K562 (cell line): ENCODE measurements at regions of chr12 and their contacts with region 1.

Region 1: DNA sequence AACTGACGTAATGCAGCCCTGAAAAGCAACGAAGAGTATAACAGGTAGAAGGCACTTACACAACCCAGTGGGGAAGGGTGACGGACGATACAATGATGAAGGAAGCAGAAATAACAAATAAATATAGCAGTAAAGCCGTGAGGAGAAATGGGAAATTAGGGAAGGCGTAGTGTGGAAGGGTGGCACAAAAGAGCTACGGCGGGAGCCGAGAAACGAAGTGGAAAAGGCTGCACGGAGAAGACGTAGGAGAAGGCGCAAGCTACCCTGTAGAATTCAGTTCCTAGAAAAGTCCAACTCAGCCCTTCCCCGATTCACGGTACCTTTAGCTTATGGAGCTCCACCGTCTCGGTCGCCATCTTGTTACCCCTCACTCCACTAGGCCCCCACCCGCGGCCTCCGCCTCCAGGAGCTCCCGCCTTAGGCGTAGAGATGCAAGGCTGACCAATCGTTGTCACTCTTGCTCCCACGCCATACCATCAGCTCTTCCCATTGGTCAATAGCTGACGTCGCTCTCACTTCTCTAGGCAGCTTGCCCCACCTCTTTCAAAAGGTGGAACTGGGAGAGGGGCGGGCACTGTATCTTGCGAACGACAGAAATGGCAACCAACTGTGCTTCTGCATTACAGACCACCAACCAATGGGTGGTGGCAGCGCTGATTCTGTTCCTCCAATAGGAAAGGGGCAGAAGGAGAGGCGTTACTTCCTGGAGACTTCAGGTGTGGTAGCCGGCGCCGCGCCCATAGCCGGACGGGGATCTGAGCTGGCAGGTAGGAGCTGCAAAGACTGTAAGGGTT is at the starts of genes ORMDL2 and SARNP:
- DNase-seq: peak; percentile 98 to 99 (median 98)
- ATAC-seq: peak; percentile 98
- H3K4me3 ChIP-seq: peak within 1 kb of the TSS; percentile 65
- H3K27ac ChIP-seq: peak within 1 kb of the TSS; percentile 93
- H3K4me1 ChIP-seq: peaks cover 3 to 8% of the 10 kb centered on the region in 2 experiments; a peak in 4 of 5 replicates
- H3K27me3 ChIP-seq: no peaks in the 10 kb centered on the region
- CTCF ChIP-seq: no peak
- EP300 ChIP-seq: no peak
- POLR2A ChIP-seq: peak; percentile 92
- RAD21 ChIP-seq: no peak
- polyA plus RNA-seq, gene ORMDL2: 98.0 to 113 TPM
- polyA plus RNA-seq, gene SARNP: 342 to 400 TPM

Region 2: DNA sequence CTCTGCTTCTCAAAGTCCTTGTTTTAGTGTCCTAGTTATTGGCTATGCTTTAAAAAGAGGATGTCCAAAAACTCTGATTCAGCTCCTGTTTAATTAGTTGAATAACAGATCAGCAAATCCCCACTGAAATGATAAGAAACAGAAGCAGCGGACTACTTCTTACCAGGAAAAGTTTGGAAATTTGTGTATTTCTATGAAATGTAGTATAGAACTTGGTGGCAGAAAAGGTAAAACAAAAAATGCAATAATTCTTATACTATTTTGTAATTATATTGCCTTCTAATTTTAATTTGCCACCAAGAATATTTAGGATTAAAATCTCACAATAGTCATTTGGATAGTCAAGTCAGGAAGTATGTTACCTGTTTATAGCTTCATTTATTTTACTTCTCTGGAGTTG is 245.4 kb before region 1 on chr12 and contains the start of gene OR2AP1:
- CTCF ChIA-PET with region 1: no interaction called
- POLR2A ChIA-PET with region 1: no interaction called
- in situ Hi-C with region 1: no loop called
- intact Hi-C with region 1: no loop called
- DNase-seq: no peak
- ATAC-seq: no peak
- H3K4me3 ChIP-seq: no peak within 1 kb of the TSS
- H3K27ac ChIP-seq: no peak within 1 kb of the TSS
- H3K4me1 ChIP-seq: no peaks in the 10 kb centered on the region
- H3K27me3 ChIP-seq: no peaks in the 10 kb centered on the region
- CTCF ChIP-seq: no peak
- EP300 ChIP-seq: no peak
- POLR2A ChIP-seq: no peak
- RAD21 ChIP-seq: no peak
- polyA plus RNA-seq, gene OR2AP1: not detected

Region 3: GRCh38 chr12:55797068-55797467 is 20.5 kb before region 1 on chr12:
- CTCF ChIA-PET with region 1: no interaction called
- POLR2A ChIA-PET with region 1: interaction called, 26 read pairs
- in situ Hi-C with region 1: no loop called
- intact Hi-C with region 1: no loop called
- DNase-seq: peak; percentile 31 to 61 (median 48)
- ATAC-seq: peak; percentile 90
- H3K4me3 ChIP-seq: no peak overlapping the region
- H3K27ac ChIP-seq: no peak overlapping the region
- H3K4me1 ChIP-seq: no peaks in the 10 kb centered on the region
- H3K27me3 ChIP-seq: no peaks in the 10 kb centered on the region
- CTCF ChIP-seq: peak; percentile 48 to 71 (median 54)
- EP300 ChIP-seq: no peak
- POLR2A ChIP-seq: no peak
- RAD21 ChIP-seq: peak; percentile 59 to 66

Region 4: DNA sequence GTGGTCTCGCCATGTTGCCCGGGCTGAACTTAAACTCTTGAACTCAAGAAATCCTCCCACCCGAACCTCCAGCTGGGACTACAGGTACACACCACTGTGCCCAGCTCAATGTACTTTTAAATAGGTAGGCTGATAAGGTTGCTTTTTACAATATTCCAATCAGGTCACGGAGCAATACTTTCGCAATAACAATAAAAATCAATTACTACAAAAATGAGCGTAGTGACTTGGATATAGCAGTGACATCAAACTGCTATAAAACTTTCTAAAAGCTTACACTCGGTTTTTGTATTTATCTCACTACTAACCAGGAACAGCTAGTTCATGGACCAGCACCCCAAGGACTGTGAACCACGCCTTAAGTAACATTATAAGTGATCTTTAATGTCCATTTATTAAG is 10.6 kb before region 1 on chr12:
- CTCF ChIA-PET with region 1: no interaction called
- POLR2A ChIA-PET with region 1: interaction called, 20 read pairs
- in situ Hi-C with region 1: no loop called
- intact Hi-C with region 1: no loop called
- DNase-seq: no peak
- ATAC-seq: no peak
- H3K4me3 ChIP-seq: no peak overlapping the region
- H3K27ac ChIP-seq: no peak overlapping the region
- H3K4me1 ChIP-seq: no peaks in the 10 kb centered on the region
- H3K27me3 ChIP-seq: no peaks in the 10 kb centered on the region
- CTCF ChIP-seq: no peak
- EP300 ChIP-seq: no peak
- POLR2A ChIP-seq: no peak
- RAD21 ChIP-seq: no peak

Region 5: DNA sequence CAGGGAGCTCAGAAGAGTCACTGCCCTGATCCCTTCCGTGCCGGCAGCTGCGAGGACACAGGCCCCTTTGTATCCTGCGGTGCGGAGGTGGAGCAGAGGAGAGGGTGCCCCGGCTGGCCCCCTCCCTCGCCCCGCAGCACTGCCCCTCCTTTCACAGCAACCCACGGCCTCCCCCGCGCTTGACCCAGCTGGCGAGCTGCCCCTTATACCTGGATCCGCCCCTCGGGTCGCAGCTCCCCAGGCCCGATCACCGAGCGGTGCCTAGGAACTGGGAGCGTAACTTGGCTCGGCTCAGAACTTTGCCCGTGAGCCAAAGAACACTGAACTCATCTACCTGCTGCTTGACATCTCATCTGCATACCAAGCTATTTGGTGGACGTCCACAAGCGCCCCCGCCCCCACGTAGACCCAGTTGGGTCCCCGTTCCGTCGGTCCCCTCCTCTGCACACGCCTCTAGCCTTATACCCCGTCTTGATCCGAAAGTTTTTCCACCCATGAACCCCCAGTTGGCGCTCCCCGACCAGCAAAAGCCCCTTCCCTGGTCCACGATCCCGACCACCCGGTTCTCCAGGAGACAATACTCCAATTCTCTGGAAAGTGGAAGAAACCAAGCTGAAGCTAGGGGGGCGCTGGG is 12.5 kb after region 1 on chr12:
- CTCF ChIA-PET with region 1: no interaction called
- POLR2A ChIA-PET with region 1: interaction called, 64 read pairs
- in situ Hi-C with region 1: no loop called
- intact Hi-C with region 1: no loop called
- DNase-seq: peak; percentile 53 to 82 (median 70)
- ATAC-seq: peak; percentile 52
- H3K4me3 ChIP-seq: peak overlapping the region; percentile 78
- H3K27ac ChIP-seq: peak overlapping the region; percentile 83
- H3K4me1 ChIP-seq: peaks cover 28 to 42% of the 10 kb centered on the region in 2 experiments; a peak in 4 of 5 replicates
- H3K27me3 ChIP-seq: no peaks in the 10 kb centered on the region
- CTCF ChIP-seq: peak in 1 of 3 experiments; percentile 29; a peak in 2 of 6 replicates
- EP300 ChIP-seq: no peak
- POLR2A ChIP-seq: no peak
- RAD21 ChIP-seq: no peak; a peak in 1 of 4 replicates

Region 6: GRCh38 chr12:55926738-55927587 is 109.4 kb after region 1 on chr12:
- CTCF ChIA-PET with region 1: no interaction called
- POLR2A ChIA-PET with region 1: interaction called, 9 read pairs
- in situ Hi-C with region 1: no loop called
- intact Hi-C with region 1: loop called (anchors 2 kb)
- DNase-seq: peak; percentile 96 to 98 (median 97)
- ATAC-seq: peak; percentile 81
- H3K4me3 ChIP-seq: peak overlapping the region; percentile 69
- H3K27ac ChIP-seq: peak overlapping the region; percentile 95
- H3K4me1 ChIP-seq: peaks cover 21 to 27% of the 10 kb centered on the region in 2 experiments; a peak in 4 of 5 replicates
- H3K27me3 ChIP-seq: no peaks in the 10 kb centered on the region
- CTCF ChIP-seq: peak; percentile 68 to 77 (median 68)
- EP300 ChIP-seq: no peak; the same call in 1 of the 2 replicates
- POLR2A ChIP-seq: no peak; the same call in 1 of the 2 replicates
- RAD21 ChIP-seq: peak in 1 of 2 experiments; percentile 30; a peak in 2 of 4 replicates

Region 7: DNA sequence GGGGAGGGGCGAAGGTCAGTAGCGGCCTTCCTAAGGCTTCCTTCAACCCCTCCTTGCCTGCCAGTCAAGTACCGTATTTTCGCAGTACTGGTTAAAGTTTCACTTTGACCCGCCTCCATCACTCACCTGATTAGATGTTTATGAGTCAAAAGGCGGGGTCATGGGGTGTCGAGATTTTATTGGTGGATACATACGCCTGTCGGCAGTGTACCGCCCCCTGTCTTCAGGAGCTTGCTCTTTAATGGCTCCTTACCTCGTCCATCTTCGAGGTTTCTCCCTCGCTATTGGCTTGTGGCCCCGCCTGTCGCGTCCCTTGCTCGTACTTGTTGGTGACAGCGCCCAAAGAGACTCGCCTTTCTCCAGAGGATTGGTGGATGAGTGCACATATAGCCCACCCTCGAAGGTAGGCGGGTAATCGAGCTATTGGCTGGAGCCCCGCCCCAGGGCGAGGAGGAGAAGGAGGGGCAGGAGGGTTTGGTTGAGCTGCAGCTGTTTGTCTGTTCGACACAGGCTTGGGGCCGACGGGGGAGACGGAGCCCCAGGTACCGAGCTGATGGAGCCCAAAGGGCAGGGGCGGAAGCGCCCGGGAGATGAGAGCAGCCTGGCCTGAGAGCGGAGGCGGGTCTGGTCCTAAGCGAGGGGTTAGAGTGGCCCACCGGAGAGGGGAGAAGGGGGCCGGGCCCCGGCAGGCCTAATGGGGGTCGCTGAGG is 156.2 kb after region 1 on chr12 and contains the start of gene RAB5B:
- CTCF ChIA-PET with region 1: no interaction called
- POLR2A ChIA-PET with region 1: interaction called, 10 read pairs
- in situ Hi-C with region 1: no loop called
- intact Hi-C with region 1: no loop called
- DNase-seq: peak; percentile 87 to 100 (median 94)
- ATAC-seq: peak; percentile 95
- H3K4me3 ChIP-seq: peak within 1 kb of the TSS; percentile 68
- H3K27ac ChIP-seq: peak within 1 kb of the TSS; percentile 88
- H3K4me1 ChIP-seq: peaks cover 14 to 21% of the 10 kb centered on the region in 2 experiments
- H3K27me3 ChIP-seq: no peaks in the 10 kb centered on the region
- CTCF ChIP-seq: peak in 1 of 3 experiments; percentile 5; a peak in 1 of 6 replicates
- EP300 ChIP-seq: peak; percentile 7; the same call in 1 of the 2 replicates
- POLR2A ChIP-seq: peak; percentile 90
- RAD21 ChIP-seq: no peak
- polyA plus RNA-seq, gene RAB5B: 6.8 to 12.2 TPM

Region 8: GRCh38 chr12:56029666-56030293 is 212.2 kb after region 1 on chr12:
- CTCF ChIA-PET with region 1: no interaction called
- POLR2A ChIA-PET with region 1: interaction called, 3 read pairs
- in situ Hi-C with region 1: loop called (anchors 10 kb)
- intact Hi-C with region 1: no loop called
- DNase-seq: peak; percentile 56 to 75 (median 65)
- ATAC-seq: peak; percentile 97
- H3K4me3 ChIP-seq: no peak overlapping the region
- H3K27ac ChIP-seq: no peak overlapping the region
- H3K4me1 ChIP-seq: peaks cover 0 to 6% of the 10 kb centered on the region in 2 experiments; a peak in 1 of 5 replicates
- H3K27me3 ChIP-seq: no peaks in the 10 kb centered on the region
- CTCF ChIP-seq: peak; percentile 71 to 74 (median 73)
- EP300 ChIP-seq: no peak
- POLR2A ChIP-seq: no peak
- RAD21 ChIP-seq: peak; percentile 77 to 87